ENCODE measurements at regions of chr3 and their contacts with region 1.

Region 1: DNA sequence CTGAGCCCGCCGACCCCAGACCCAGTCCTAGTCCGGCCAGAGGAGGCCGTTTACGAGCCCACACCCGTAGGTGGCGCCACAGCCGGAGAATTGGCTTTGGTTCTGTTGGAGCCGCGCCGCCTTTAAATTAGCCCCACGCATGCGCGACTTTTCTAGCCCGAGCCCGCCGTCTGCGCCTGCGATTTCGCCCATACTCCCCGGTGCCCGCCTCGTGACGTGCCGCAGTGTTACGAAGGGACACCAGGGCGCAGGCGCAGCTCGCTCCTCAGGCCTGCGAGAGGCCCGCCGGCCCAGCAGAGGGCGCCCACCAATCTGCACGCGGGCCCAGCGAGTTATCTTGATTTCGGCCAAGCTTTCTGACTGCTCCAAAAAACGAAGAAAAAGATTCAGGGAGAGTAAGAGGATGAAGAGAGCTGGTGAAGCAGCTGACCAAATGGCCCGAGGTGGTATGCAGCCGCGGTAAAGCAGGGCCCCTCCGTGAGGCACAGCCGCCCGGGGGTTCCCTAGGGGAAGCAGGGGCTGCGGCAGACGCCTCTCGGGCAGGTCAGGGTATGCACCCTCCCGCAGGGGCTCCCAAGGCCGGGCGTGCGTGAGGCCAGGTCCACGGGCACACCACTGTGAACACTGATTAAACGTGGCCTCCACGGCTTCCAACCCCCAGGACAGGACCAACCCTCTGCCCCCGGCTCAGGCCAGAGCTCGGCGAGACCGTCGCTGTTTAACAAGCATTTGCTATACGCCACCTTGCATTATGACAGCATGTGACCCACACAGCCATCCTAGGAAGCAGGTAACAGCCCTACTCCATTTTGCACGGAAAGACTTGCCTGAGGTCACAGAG is 32.8 kb downstream of the RPN1 start:
- DNase-seq: peak; percentile 94 to 98
- H3K4me3 ChIP-seq: peak overlapping the region; percentile 79
- H3K4me1 ChIP-seq: peaks cover 6% of the 10 kb centered on the region
- H3K27me3 ChIP-seq: no peaks in the 10 kb centered on the region

Region 2: GRCh38 chr3:128095222-128095703 is 522.5 kb before region 1 on chr3:
- in situ Hi-C with region 1: loop called (anchors 10 kb)
- DNase-seq: peak; percentile 26 to 80
- H3K4me3 ChIP-seq: no peak overlapping the region
- H3K4me1 ChIP-seq: peaks cover 15% of the 10 kb centered on the region
- H3K27me3 ChIP-seq: no peaks in the 10 kb centered on the region

Region 3: GRCh38 chr3:128794770-128795649 is 177.2 kb after region 1 on chr3:
- in situ Hi-C with region 1: loop called (anchors 10 kb)
- DNase-seq: peak; percentile 58 to 76
- H3K4me3 ChIP-seq: no peak overlapping the region
- H3K4me1 ChIP-seq: peaks cover 4% of the 10 kb centered on the region
- H3K27me3 ChIP-seq: no peaks in the 10 kb centered on the region